ENCODE measurements at regions of chr5 and their contacts with region 1.

Region 1: DNA sequence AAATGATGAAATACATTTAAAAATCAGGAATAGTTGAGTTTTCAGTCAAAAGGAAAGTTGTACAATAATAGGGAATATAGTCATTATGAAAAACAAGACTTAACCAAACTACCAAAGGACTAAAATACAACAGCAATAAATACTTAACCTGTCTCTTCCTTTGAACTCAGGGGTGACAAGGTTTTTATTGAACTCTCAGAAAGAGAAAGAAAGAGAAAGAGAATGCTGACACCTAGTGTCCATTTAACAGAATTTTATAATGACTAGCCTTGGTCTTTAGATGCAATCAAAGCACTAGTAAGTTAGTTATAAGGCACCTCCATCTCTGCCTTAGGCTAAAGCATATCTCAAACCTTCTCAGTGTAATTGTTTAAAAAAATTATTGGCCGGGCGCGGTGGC is 47.5 kb downstream of the UIMC1 start:
- DNase-seq: no peak
- H3K4me3 ChIP-seq: no peak overlapping the region
- H3K27ac ChIP-seq: no peak overlapping the region
- H3K4me1 ChIP-seq: peaks cover 0 to 25% (median 0%) of the 10 kb centered on the region in 3 donors
- H3K27me3 ChIP-seq: no peaks in the 10 kb centered on the region
- CTCF ChIP-seq: peak in 5 of 6 experiments; percentile 32 to 63 (median 45)
- POLR2A ChIP-seq: no peak

Region 2: GRCh38 chr5:176660860-176661641 is 298.0 kb before region 1 on chr5:
- intact Hi-C with region 1: loop called (anchors 10 kb)
- DNase-seq: no peak
- H3K4me3 ChIP-seq: no peak overlapping the region
- H3K27ac ChIP-seq: no peak overlapping the region
- H3K4me1 ChIP-seq: peaks cover 13 to 22% (median 16%) of the 10 kb centered on the region in 3 donors
- H3K27me3 ChIP-seq: peaks cover 0 to 44% (median 0%) of the 10 kb centered on the region in 4 donors
- CTCF ChIP-seq: peak; percentile 86 to 96 (median 92)
- POLR2A ChIP-seq: no peak

Region 3: DNA sequence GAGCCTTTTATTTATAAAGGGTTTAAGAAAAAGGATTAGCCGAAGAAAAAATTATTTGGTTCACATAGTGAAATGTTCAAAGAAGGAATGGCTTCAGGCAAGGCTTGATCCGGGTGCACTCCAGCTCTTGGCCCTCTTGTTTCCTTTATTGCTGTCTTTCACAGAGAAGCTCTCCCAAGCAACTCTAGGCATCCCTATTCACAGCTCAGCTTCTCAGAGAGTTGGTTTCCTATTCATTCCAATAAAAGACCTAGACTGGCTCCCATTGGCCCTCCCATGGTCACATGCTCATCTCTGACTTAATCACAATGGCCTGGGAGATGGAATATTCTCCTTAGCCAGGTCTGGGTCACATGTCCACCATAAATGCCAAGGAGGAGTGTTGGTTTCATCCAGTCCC is 118.3 kb after region 1 on chr5:
- intact Hi-C with region 1: no loop called
- DNase-seq: no peak
- H3K4me3 ChIP-seq: no peak overlapping the region
- H3K27ac ChIP-seq: no peak overlapping the region
- H3K4me1 ChIP-seq: no peaks in the 10 kb centered on the region
- H3K27me3 ChIP-seq: peaks cover 0 to 8% (median 0%) of the 10 kb centered on the region in 4 donors
- CTCF ChIP-seq: no peak
- POLR2A ChIP-seq: no peak

Measured in esophagus squamous epithelium (tissue), 5 donors.